Heart left ventricle (tissue), 16 donors: ENCODE measurements at regions of chr2 and their contacts with region 1.

Region 1: DNA sequence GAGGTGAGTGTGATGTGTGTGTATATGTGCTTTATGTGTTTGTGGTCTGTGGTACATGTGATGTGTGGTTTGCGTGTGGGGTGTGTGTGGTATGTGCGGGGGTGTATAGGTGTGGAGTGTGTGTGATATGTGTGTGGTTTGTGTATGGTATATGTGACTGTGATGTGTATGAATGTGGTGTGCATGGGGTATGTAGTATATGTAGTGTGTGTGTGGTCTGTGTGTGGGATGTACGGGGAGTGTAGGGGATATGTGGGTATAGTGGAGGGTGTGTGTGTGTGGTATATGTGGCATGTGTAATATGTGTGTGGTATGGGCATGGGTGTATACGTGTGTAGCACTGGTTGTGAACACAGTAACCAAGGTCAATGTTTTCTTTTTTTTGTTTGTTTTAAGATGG is 87.4 kb downstream of the ZNF385B start:
- DNase-seq: no peak
- ATAC-seq: peak in 2 of 4 donors; percentile 26 to 43
- H3K4me3 ChIP-seq: no peak overlapping the region
- H3K27ac ChIP-seq: no peak overlapping the region
- H3K4me1 ChIP-seq: peaks cover 0 to 12% (median 0%) of the 10 kb centered on the region in 12 donors
- H3K27me3 ChIP-seq: no peaks in the 10 kb centered on the region
- CTCF ChIP-seq: no peak
- POLR2A ChIP-seq: no peak

Region 2: DNA sequence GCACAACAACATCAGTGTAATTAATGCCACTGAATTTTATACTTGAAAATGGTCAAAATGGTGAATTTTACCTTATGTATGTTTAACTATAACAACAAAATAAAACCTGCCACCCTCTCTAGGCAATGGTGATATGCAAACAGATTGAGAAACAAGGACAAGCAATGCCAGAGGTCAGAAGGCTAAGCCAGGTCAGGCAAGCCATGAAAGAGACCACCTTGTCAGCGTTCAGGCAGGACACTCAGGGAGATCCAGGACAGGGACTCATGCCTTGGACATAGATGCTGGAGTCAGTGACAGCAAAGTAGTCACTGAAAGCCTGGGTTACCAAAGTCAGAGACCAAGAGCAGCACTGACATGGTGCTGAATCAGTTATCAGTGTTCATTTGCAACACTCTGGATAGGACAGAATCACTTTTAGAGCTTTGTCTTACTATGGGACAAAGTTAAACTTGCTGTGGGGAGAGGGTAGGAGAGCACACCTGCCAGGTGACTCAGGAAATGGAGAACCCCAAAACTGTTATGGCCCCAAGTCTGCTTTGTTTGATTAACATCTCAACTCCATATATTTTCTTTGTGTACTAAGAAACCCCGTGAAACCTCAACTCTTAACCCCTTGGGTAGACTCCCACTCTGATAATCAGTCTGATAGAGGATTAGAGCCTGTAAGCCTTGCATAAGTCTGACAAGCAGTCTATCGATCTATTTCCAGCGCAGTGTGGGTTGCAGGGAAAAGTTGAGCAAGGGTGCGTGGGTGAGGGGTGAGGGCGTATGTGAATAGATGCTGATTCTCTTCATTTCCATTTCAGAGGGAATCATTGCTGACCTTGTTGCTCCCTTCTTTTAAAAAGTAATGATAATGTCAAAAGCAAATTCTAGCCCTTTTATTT is 136.1 kb after region 1 on chr2:
- intact Hi-C with region 1: loop called in 1 of 10 experiments (anchors 5 kb)
- DNase-seq: no peak
- ATAC-seq: no peak
- H3K4me3 ChIP-seq: no peak overlapping the region
- H3K27ac ChIP-seq: no peak overlapping the region
- H3K4me1 ChIP-seq: no peaks in the 10 kb centered on the region
- H3K27me3 ChIP-seq: no peaks in the 10 kb centered on the region
- CTCF ChIP-seq: no peak
- POLR2A ChIP-seq: no peak

Region 3: GRCh38 chr2:180033993-180034894 is 260.3 kb after region 1 on chr2:
- intact Hi-C with region 1: no loop called
- DNase-seq: peak in 2 of 5 donors; percentile 18 to 32
- ATAC-seq: peak; percentile 63 to 86 (median 77)
- H3K4me3 ChIP-seq: no peak overlapping the region
- H3K27ac ChIP-seq: no peak overlapping the region
- H3K4me1 ChIP-seq: no peaks in the 10 kb centered on the region
- H3K27me3 ChIP-seq: no peaks in the 10 kb centered on the region
- CTCF ChIP-seq: no peak
- POLR2A ChIP-seq: no peak